ENCODE measurements at regions of chr11 and their contacts with region 1.

Region 1: GRCh38 chr11:110195845-110196754 is 100.3 kb downstream of the RDX start:
- DNase-seq: peak; percentile 87
- ATAC-seq: peak; percentile 55
- H3K4me3 ChIP-seq: no peak overlapping the region
- H3K27ac ChIP-seq: peak overlapping the region; percentile 59
- H3K4me1 ChIP-seq: peaks cover 26% of the 10 kb centered on the region
- H3K27me3 ChIP-seq: no peaks in the 10 kb centered on the region
- CTCF ChIP-seq: no peak
- POLR2A ChIP-seq: no peak
- RAD21 ChIP-seq: no peak

Region 2: GRCh38 chr11:109946322-109946846 is 249.7 kb before region 1 on chr11:
- CTCF ChIA-PET with region 1: no interaction called
- POLR2A ChIA-PET with region 1: no interaction called
- dilution Hi-C with region 1: no loop called
- in situ Hi-C with region 1: loop called (anchors 25 kb)
- intact Hi-C with region 1: loop called (anchors 1 kb)
- DNase-seq: peak; percentile 97
- ATAC-seq: peak; percentile 99
- H3K4me3 ChIP-seq: peak overlapping the region; percentile 32; the same call in 1 of the 2 replicates
- H3K27ac ChIP-seq: peak overlapping the region; percentile 86; the same call in 1 of the 2 replicates
- H3K4me1 ChIP-seq: peaks cover 3% of the 10 kb centered on the region
- H3K27me3 ChIP-seq: no peaks in the 10 kb centered on the region
- CTCF ChIP-seq: peak; percentile 97
- POLR2A ChIP-seq: peak; percentile 83
- RAD21 ChIP-seq: peak; percentile 97

Region 3: GRCh38 chr11:110092515-110093404 is 103.3 kb before region 1 on chr11 and contains the start of gene ZC3H12C:
- CTCF ChIA-PET with region 1: interaction called, 3 read pairs
- POLR2A ChIA-PET with region 1: no interaction called
- dilution Hi-C with region 1: no loop called
- in situ Hi-C with region 1: no loop called
- intact Hi-C with region 1: loop called (anchors 5 kb)
- DNase-seq: peak; percentile 90
- ATAC-seq: peak; percentile 88
- H3K4me3 ChIP-seq: peak within 1 kb of the TSS; percentile 76
- H3K27ac ChIP-seq: peak within 1 kb of the TSS; percentile 92
- H3K4me1 ChIP-seq: peaks cover 7% of the 10 kb centered on the region
- H3K27me3 ChIP-seq: no peaks in the 10 kb centered on the region
- CTCF ChIP-seq: peak; percentile 81
- POLR2A ChIP-seq: peak; percentile 80
- RAD21 ChIP-seq: peak; percentile 58
- total RNA-seq, gene ZC3H12C: 14.2 and 15.8 TPM in 2 replicates

Region 4: GRCh38 chr11:110376711-110377324 is 180.7 kb after region 1 on chr11:
- CTCF ChIA-PET with region 1: interaction called, 9 read pairs
- POLR2A ChIA-PET with region 1: no interaction called
- dilution Hi-C with region 1: no loop called
- in situ Hi-C with region 1: loop called (anchors 5 kb)
- intact Hi-C with region 1: loop called (anchors 1 kb)
- DNase-seq: peak; percentile 79
- ATAC-seq: peak; percentile 84
- H3K4me3 ChIP-seq: no peak overlapping the region
- H3K27ac ChIP-seq: no peak overlapping the region
- H3K4me1 ChIP-seq: peaks cover 6% of the 10 kb centered on the region
- H3K27me3 ChIP-seq: no peaks in the 10 kb centered on the region
- CTCF ChIP-seq: peak; percentile 83
- POLR2A ChIP-seq: no peak
- RAD21 ChIP-seq: peak; percentile 79

Region 5: GRCh38 chr11:111230122-111230465 is 1034.0 kb after region 1 on chr11:
- CTCF ChIA-PET with region 1: no interaction called
- POLR2A ChIA-PET with region 1: no interaction called
- dilution Hi-C with region 1: no loop called
- in situ Hi-C with region 1: no loop called
- intact Hi-C with region 1: loop called (anchors 10 kb)
- DNase-seq: no peak
- ATAC-seq: peak; percentile 50
- H3K4me3 ChIP-seq: no peak overlapping the region
- H3K27ac ChIP-seq: peak overlapping the region; percentile 33; the same call in 1 of the 2 replicates
- H3K4me1 ChIP-seq: peaks cover 8% of the 10 kb centered on the region
- H3K27me3 ChIP-seq: no peaks in the 10 kb centered on the region
- CTCF ChIP-seq: no peak
- POLR2A ChIP-seq: no peak
- RAD21 ChIP-seq: no peak